CD4-positive, alpha-beta T cell (primary cell): ENCODE measurements at regions of chr5 and their contacts with region 1.

Region 1: GRCh38 chr5:138035605-138036537 is 3.0 kb upstream of the FAM13B start:
- DNase-seq: peak; percentile 27 to 89 (median 44)
- ATAC-seq: peak; percentile 60
- H3K4me3 ChIP-seq: no peak overlapping the region
- H3K4me3 Mint-ChIP-seq: peak overlapping the region; percentile 87
- H3K27ac ChIP-seq: no peak overlapping the region
- H3K27ac Mint-ChIP-seq: peak overlapping the region; percentile 38
- H3K4me1 ChIP-seq: peaks cover 27% of the 10 kb centered on the region
- H3K4me1 Mint-ChIP-seq: peaks cover 35% of the 10 kb centered on the region
- H3K27me3 ChIP-seq: no peaks in the 10 kb centered on the region
- H3K27me3 Mint-ChIP-seq: no peaks in the 10 kb centered on the region
- CTCF ChIP-seq: peak; percentile 97

Region 2: GRCh38 chr5:138065102-138065501 is 29.2 kb after region 1 on chr5:
- CTCF ChIA-PET with region 1: interaction called, 18 read pairs
- POLR2A ChIA-PET with region 1: interaction called, 4 read pairs
- intact Hi-C with region 1: loop called (anchors 1 kb)
- DNase-seq: peak in 2 of 14 experiments; percentile 17 to 24
- ATAC-seq: no peak
- H3K4me3 ChIP-seq: no peak overlapping the region
- H3K4me3 Mint-ChIP-seq: no peak overlapping the region
- H3K27ac ChIP-seq: no peak overlapping the region
- H3K27ac Mint-ChIP-seq: no peak overlapping the region
- H3K4me1 ChIP-seq: no peaks in the 10 kb centered on the region
- H3K4me1 Mint-ChIP-seq: peaks cover 6% of the 10 kb centered on the region
- H3K27me3 ChIP-seq: no peaks in the 10 kb centered on the region
- H3K27me3 Mint-ChIP-seq: no peaks in the 10 kb centered on the region
- CTCF ChIP-seq: no peak

Region 3: DNA sequence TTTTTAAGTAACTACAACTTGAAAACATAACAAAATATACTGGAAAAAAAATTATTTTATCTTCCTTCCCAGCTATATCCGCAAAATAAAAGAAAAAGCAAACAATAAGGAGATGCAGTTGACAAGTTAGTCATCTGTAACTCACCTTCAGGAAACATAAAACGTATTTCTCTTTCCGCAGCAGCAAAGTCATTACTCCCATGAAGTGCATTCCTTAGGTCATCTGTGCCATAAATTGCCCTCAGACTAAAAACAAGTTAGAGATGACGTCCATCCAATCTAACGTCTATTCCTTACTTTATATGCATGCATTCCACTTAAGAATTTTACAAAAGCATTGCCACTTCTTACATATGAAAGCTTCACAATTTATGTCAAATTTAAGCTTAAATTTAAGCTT is 92.5 kb after region 1 on chr5:
- CTCF ChIA-PET with region 1: interaction called, 6 read pairs
- POLR2A ChIA-PET with region 1: no interaction called
- intact Hi-C with region 1: loop called (anchors 1 to 5 kb)
- DNase-seq: no peak
- ATAC-seq: no peak
- H3K4me3 ChIP-seq: no peak overlapping the region
- H3K4me3 Mint-ChIP-seq: no peak overlapping the region
- H3K27ac ChIP-seq: no peak overlapping the region
- H3K27ac Mint-ChIP-seq: no peak overlapping the region
- H3K4me1 ChIP-seq: no peaks in the 10 kb centered on the region
- H3K4me1 Mint-ChIP-seq: no peaks in the 10 kb centered on the region
- H3K27me3 ChIP-seq: peaks cover 0 to 4% of the 10 kb centered on the region in 2 experiments
- H3K27me3 Mint-ChIP-seq: peaks cover 10% of the 10 kb centered on the region
- CTCF ChIP-seq: no peak

Region 4: GRCh38 chr5:138178516-138179276 is 142.8 kb after region 1 on chr5 and contains the starts of genes BRD8 and KIF20A:
- CTCF ChIA-PET with region 1: interaction called, 3 read pairs
- POLR2A ChIA-PET with region 1: no interaction called
- intact Hi-C with region 1: loop called in 1 of 2 experiments (anchors 2 kb)
- DNase-seq: peak; percentile 77 to 94 (median 85)
- ATAC-seq: peak; percentile 86
- H3K4me3 ChIP-seq: peak within 1 kb of the TSS; percentile 94
- H3K4me3 Mint-ChIP-seq: no peak within 1 kb of the TSS
- H3K27ac ChIP-seq: peak within 1 kb of the TSS; percentile 55 to 76
- H3K27ac Mint-ChIP-seq: no peak within 1 kb of the TSS
- H3K4me1 ChIP-seq: peaks cover 27% of the 10 kb centered on the region
- H3K4me1 Mint-ChIP-seq: peaks cover 11% of the 10 kb centered on the region
- H3K27me3 ChIP-seq: no peaks in the 10 kb centered on the region
- H3K27me3 Mint-ChIP-seq: no peaks in the 10 kb centered on the region
- CTCF ChIP-seq: no peak
- total RNA-seq, gene BRD8: 6.9 to 9.6 TPM
- total RNA-seq, gene KIF20A: not detected

Region 5: DNA sequence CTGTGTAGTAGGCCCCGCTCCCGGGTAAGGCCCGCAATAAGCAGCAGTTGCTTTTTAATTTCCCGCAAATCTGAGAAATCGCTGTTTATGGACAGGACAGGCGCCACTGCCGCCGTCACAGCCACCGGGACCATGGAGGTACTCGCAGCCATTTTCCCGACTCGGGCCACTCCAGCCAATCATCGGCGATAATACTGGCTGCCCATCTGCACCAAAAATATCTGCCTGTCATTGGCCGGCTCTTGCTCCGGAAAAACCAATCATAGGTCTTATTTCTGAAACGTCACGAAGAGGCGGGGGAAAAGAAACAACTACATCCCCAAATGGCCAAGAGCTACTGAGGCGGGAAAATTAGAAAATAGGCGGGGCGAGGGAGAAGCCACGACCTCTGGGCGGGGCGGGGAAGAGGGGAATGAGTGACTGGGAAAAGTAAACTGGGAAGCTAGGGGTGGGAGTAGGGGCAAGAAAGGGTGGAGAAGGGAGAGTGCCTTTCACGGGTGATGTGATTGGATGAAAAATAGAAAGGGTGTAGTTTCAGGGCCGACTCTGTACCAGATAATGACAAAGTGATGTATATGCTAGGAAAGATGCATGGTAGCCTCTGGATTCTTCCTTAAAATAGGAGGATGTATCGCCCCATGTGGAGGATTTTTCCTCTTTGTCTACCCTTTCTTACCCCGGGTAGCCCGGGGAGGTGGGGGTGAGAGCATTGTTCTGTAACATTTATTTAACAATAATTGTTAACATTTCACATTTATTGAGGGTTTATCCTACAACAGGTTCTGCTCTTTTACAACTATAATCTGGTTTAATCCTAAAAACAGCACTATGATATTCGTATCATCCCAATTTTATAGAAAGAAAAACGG is 177.5 kb after region 1 on chr5 and contains the start of gene CDC23:
- CTCF ChIA-PET with region 1: no interaction called
- POLR2A ChIA-PET with region 1: no interaction called
- intact Hi-C with region 1: loop called in 1 of 2 experiments (anchors 5 kb)
- DNase-seq: peak; percentile 78 to 98 (median 83)
- ATAC-seq: peak; percentile 98
- H3K4me3 ChIP-seq: peak within 1 kb of the TSS; percentile 90
- H3K4me3 Mint-ChIP-seq: peak within 1 kb of the TSS; percentile 95
- H3K27ac ChIP-seq: peak within 1 kb of the TSS; percentile 70 to 71
- H3K27ac Mint-ChIP-seq: peak within 1 kb of the TSS; percentile 91
- H3K4me1 ChIP-seq: peaks cover 23% of the 10 kb centered on the region
- H3K4me1 Mint-ChIP-seq: peaks cover 26% of the 10 kb centered on the region
- H3K27me3 ChIP-seq: peaks cover 0 to 2% of the 10 kb centered on the region in 2 experiments
- H3K27me3 Mint-ChIP-seq: peaks cover 4% of the 10 kb centered on the region
- CTCF ChIP-seq: no peak
- total RNA-seq, gene CDC23: 14.2 to 15.6 TPM

Region 6: GRCh38 chr5:138331449-138332368 is 295.8 kb after region 1 on chr5 and contains the start of gene CDC25C:
- CTCF ChIA-PET with region 1: interaction called, 3 read pairs
- POLR2A ChIA-PET with region 1: no interaction called
- intact Hi-C with region 1: loop called in 1 of 2 experiments (anchors 5 kb)
- DNase-seq: peak; percentile 92 to 99 (median 95)
- ATAC-seq: peak; percentile 99
- H3K4me3 ChIP-seq: peak within 1 kb of the TSS; percentile 68
- H3K4me3 Mint-ChIP-seq: peak within 1 kb of the TSS; percentile 83
- H3K27ac ChIP-seq: no peak within 1 kb of the TSS
- H3K27ac Mint-ChIP-seq: peak within 1 kb of the TSS; percentile 40
- H3K4me1 ChIP-seq: peaks cover 13% of the 10 kb centered on the region
- H3K4me1 Mint-ChIP-seq: peaks cover 8% of the 10 kb centered on the region
- H3K27me3 ChIP-seq: no peaks in the 10 kb centered on the region
- H3K27me3 Mint-ChIP-seq: no peaks in the 10 kb centered on the region
- CTCF ChIP-seq: no peak
- total RNA-seq, gene CDC25C: not detected

Region 7: GRCh38 chr5:139197710-139198669 is 1162.1 kb after region 1 on chr5 and contains the start of gene SIL1:
- CTCF ChIA-PET with region 1: no interaction called
- POLR2A ChIA-PET with region 1: no interaction called
- intact Hi-C with region 1: loop called in 1 of 2 experiments (anchors 10 kb)
- DNase-seq: peak; percentile 86 to 99 (median 96)
- ATAC-seq: peak; percentile 99
- H3K4me3 ChIP-seq: peak within 1 kb of the TSS; percentile 83
- H3K4me3 Mint-ChIP-seq: peak within 1 kb of the TSS; percentile 85
- H3K27ac ChIP-seq: peak within 1 kb of the TSS; percentile 82 to 86
- H3K27ac Mint-ChIP-seq: peak within 1 kb of the TSS; percentile 77
- H3K4me1 ChIP-seq: peaks cover 17% of the 10 kb centered on the region
- H3K4me1 Mint-ChIP-seq: peaks cover 21% of the 10 kb centered on the region
- H3K27me3 ChIP-seq: no peaks in the 10 kb centered on the region
- H3K27me3 Mint-ChIP-seq: no peaks in the 10 kb centered on the region
- CTCF ChIP-seq: no peak
- total RNA-seq, gene SIL1: 5.6 to 9.2 TPM